Activated naive CD4-positive, alpha-beta T cell treated with anti-CD3 and anti-CD28 coated beads for 36 hours (primary cell): ENCODE measurements at regions of chrX and their contacts with region 1.

Region 1: DNA sequence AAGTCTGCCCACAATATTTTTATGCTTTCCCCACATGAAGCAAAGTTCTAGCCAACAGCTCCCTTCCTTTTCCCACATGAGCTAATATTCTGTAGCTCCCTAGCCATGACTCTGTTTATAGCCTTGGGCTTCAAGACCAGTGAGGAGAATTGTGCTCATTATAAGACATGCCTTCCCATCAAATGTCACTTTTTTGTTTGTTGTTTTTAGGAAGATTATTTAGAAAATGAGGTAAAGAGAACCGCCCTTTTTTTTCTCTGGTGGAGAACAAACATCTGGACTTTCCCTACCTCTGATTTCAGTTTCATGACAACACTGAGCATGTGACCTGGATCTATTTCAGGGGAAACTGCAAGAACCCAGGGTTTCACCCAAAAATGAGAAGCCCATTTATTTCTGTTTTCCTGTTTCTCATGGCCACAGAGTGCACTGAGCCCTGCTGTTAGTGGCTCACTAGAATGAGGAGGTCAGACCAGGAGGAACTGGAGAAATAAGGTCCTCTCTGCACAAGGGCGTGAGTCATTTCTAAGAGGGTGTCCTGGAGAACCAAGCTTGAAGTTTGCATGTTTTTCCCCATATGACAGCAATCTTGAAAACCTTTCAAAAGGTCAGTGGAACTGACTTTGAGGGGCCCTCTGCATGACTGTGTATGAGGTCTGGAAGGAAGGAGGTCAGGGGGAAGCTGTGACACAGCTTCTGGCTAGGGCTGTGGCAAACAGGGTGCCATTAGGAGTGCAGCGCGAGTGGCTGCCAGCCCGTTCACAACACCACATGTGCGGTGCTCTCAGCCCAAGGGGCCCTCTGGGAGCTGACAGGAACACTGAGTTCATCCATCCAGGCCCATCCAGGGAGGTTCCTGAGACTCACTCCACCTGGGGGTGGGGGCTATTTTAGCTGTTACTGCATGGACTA is 55.2 kb downstream of the CHST7 start:
- DNase-seq: peak; percentile 6
- H3K4me3 Mint-ChIP-seq: no peak overlapping the region
- H3K27ac Mint-ChIP-seq: no peak overlapping the region
- H3K4me1 Mint-ChIP-seq: peaks cover 24% of the 10 kb centered on the region
- H3K27me3 Mint-ChIP-seq: no peaks in the 10 kb centered on the region

Region 2: GRCh38 chrX:46588263-46588662 is 40.5 kb before region 1 on chrX:
- CTCF ChIA-PET with region 1: no interaction called
- intact Hi-C with region 1: loop called (anchors 5 kb)
- DNase-seq: peak; percentile 78
- H3K4me3 Mint-ChIP-seq: peak overlapping the region; percentile 34
- H3K27ac Mint-ChIP-seq: peak overlapping the region; percentile 80
- H3K4me1 Mint-ChIP-seq: peaks cover 22% of the 10 kb centered on the region
- H3K27me3 Mint-ChIP-seq: no peaks in the 10 kb centered on the region